SK-N-SH (cell line): ENCODE measurements at regions of chr5 and their contacts with region 1.

Region 1: GRCh38 chr5:73201547-73202513 is 28.8 kb downstream of the TMEM174 start:
- DNase-seq: peak; percentile 89
- H3K4me3 ChIP-seq: peak overlapping the region in 1 of 2 experiments; percentile 42; a peak in 2 of 4 replicates
- H3K27ac ChIP-seq: no peak overlapping the region
- H3K4me1 ChIP-seq: peaks cover 0 to 7% of the 10 kb centered on the region in 2 experiments; a peak in 3 of 4 replicates
- H3K27me3 ChIP-seq: no peaks in the 10 kb centered on the region
- CTCF ChIP-seq: peak; percentile 67
- EP300 ChIP-seq: no peak
- RAD21 ChIP-seq: peak; percentile 78

Region 2: DNA sequence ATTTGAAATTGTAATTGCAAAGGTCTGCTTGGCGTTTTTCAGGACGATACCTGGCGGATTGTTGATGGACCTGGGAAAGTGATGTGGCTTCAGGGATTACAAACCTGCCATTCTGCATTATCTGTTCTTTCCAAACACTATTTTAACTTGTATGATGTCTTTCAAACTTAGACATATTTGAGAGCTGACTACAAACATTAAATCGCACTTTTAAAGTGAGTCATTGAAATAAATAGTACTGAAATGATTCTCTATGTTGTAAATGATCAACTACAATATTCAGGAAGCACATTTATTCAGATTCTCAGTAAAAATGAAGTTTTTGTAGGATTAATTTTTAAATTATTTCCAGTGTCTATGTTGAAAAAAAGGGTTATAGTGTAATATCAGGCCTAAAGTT is 113.8 kb before region 1 on chr5:
- CTCF ChIA-PET with region 1: interaction called, 14 read pairs
- POLR2A ChIA-PET with region 1: no interaction called
- DNase-seq: no peak
- H3K4me3 ChIP-seq: no peak overlapping the region
- H3K27ac ChIP-seq: no peak overlapping the region
- H3K4me1 ChIP-seq: peaks cover 0 to 5% of the 10 kb centered on the region in 2 experiments; a peak in 1 of 4 replicates
- H3K27me3 ChIP-seq: no peaks in the 10 kb centered on the region
- CTCF ChIP-seq: no peak
- EP300 ChIP-seq: no peak
- RAD21 ChIP-seq: no peak

Region 3: DNA sequence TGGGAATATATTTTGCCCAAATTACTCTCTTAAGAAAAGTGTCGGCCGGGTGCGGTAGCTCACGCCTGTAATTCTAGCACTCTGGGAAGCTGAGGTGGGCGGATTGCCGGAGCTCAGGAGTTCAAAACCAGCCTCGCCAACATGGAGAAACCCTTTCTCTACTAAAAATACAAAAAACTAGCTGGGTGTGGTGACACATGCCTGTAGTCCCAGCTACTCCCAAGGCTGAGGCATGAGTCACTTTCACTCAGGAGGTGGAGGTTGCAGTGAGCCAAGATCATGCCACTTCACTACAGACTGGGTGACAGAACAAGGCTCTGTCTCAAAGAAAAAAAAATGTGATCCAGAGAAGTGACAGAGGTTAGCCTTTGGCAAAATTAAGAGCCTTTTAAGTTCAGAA is 107.9 kb before region 1 on chr5:
- CTCF ChIA-PET with region 1: interaction called, 14 read pairs
- POLR2A ChIA-PET with region 1: no interaction called
- DNase-seq: no peak
- H3K4me3 ChIP-seq: no peak overlapping the region
- H3K27ac ChIP-seq: peak overlapping the region in 1 of 2 experiments; percentile 39; a peak in 2 of 4 replicates
- H3K4me1 ChIP-seq: peaks cover 0 to 5% of the 10 kb centered on the region in 2 experiments; a peak in 2 of 4 replicates
- H3K27me3 ChIP-seq: no peaks in the 10 kb centered on the region
- CTCF ChIP-seq: no peak
- EP300 ChIP-seq: no peak
- RAD21 ChIP-seq: no peak

Region 4: GRCh38 chr5:73519531-73520283 is 317.9 kb after region 1 on chr5:
- CTCF ChIA-PET with region 1: no interaction called
- POLR2A ChIA-PET with region 1: no interaction called
- DNase-seq: peak; percentile 84
- H3K4me3 ChIP-seq: no peak overlapping the region
- H3K27ac ChIP-seq: no peak overlapping the region
- H3K4me1 ChIP-seq: no peaks in the 10 kb centered on the region; a peak in 1 of 4 replicates
- H3K27me3 ChIP-seq: no peaks in the 10 kb centered on the region
- CTCF ChIP-seq: peak; percentile 81
- EP300 ChIP-seq: no peak
- RAD21 ChIP-seq: peak; percentile 87